Activated CD8-positive, alpha-beta memory T cell treated with anti-CD3 and anti-CD28 coated beads, Interleukin-2, amount 10 ng/mL, durations not matched to agents 7 days and 5 days (primary cell): ENCODE measurements at regions of chr19 and their contacts with region 1.

Region 1: DNA sequence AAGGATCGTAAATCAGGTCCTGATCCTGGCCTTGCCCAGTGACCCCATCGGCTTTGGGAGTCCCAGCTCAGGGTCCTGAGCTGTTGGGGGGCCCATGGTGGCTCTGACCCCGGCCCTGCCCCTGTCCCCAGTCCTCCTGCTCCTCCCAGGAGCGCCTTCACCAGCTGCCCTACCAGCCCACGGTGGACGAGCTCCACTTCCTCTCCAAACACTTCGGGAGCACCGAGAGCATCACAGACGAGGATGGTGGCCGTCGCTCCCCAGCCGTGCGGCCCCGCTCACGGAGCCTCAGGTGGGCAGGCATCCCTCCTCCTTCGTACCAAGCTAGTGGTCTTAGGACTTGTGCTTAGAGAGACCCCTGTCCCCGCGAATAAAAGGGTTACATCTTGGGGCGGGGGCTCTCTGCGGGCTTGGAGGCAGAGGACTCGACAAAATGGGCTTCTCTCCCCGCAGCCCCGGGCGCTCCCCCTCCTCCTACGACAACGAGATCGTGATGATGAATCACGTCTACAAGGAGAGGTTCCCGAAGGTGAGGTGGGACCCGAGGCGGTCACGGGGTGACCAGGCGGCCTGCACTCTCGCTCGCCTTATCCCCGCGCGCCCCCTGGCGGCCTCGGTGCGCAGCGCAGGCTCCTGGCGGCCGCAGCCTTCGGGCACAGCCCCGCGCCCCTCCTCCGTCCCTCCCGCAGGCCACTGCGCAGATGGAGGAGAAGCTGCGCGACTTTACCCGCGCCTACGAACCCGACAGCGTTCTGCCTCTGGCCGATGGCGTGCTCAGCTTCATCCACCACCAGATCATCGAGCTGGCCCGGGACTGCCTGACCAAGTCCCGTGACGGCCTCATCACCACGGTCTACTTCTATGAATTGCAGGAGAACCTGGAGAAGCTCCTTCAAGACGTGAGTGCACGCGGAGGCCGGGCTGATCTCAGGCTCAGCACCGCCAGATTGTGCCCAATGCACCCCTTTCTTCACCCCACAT is 9.1 kb downstream of the MAST1 start:
- DNase-seq: peak; percentile 87
- ATAC-seq: peak; percentile 97
- H3K4me3 Mint-ChIP-seq: peak overlapping the region; percentile 35
- H3K27ac Mint-ChIP-seq: no peak overlapping the region
- H3K4me1 Mint-ChIP-seq: peaks cover 8% of the 10 kb centered on the region
- H3K27me3 Mint-ChIP-seq: peaks cover 22% of the 10 kb centered on the region

Region 2: GRCh38 chr19:12757544-12758274 is 89.7 kb before region 1 on chr19:
- CTCF ChIA-PET with region 1: interaction called, 146 read pairs
- DNase-seq: peak; percentile 70
- ATAC-seq: peak; percentile 80
- H3K4me3 Mint-ChIP-seq: peak overlapping the region; percentile 23
- H3K27ac Mint-ChIP-seq: no peak overlapping the region
- H3K4me1 Mint-ChIP-seq: peaks cover 5% of the 10 kb centered on the region
- H3K27me3 Mint-ChIP-seq: peaks cover 15% of the 10 kb centered on the region

Region 3: DNA sequence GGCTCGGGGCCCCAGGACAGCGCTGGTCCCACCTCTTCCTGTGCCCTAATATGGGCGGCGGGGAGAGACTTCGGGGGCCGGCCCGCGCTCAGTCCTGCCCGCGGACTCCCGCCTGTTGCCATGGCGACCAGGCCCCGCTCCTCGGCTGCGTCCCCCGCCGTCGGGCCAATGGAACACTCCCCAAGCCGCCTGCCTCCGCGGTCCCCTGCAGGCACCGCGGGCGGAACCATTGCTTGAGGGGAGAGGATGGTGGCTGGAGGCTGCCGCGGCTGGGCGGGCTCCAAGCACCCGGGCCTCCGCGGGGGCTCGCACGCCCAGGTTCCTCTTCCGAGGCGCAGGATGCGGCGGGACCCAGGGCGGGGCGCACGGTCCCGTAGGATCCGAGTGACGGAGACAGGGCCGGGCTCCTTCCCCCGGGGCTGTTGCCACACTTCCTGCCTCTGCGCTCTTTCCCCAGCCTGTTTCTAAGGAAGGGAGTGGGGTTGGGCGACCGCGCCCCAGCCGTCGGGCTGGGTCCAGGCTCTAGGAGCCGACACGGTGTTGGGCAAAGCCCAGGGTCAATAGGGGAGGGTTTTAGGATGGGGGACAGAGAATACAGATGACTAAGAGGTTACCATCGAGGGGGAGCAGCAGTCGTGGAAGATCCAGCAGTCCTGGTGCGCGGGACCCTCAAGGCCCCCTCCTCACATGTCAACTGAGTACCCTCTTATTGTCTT is 57.4 kb before region 1 on chr19:
- CTCF ChIA-PET with region 1: interaction called, 10 read pairs
- DNase-seq: peak; percentile 99
- ATAC-seq: peak; percentile 50
- H3K4me3 Mint-ChIP-seq: peak overlapping the region; percentile 93
- H3K27ac Mint-ChIP-seq: peak overlapping the region; percentile 95
- H3K4me1 Mint-ChIP-seq: peaks cover 37% of the 10 kb centered on the region
- H3K27me3 Mint-ChIP-seq: no peaks in the 10 kb centered on the region

Region 4: DNA sequence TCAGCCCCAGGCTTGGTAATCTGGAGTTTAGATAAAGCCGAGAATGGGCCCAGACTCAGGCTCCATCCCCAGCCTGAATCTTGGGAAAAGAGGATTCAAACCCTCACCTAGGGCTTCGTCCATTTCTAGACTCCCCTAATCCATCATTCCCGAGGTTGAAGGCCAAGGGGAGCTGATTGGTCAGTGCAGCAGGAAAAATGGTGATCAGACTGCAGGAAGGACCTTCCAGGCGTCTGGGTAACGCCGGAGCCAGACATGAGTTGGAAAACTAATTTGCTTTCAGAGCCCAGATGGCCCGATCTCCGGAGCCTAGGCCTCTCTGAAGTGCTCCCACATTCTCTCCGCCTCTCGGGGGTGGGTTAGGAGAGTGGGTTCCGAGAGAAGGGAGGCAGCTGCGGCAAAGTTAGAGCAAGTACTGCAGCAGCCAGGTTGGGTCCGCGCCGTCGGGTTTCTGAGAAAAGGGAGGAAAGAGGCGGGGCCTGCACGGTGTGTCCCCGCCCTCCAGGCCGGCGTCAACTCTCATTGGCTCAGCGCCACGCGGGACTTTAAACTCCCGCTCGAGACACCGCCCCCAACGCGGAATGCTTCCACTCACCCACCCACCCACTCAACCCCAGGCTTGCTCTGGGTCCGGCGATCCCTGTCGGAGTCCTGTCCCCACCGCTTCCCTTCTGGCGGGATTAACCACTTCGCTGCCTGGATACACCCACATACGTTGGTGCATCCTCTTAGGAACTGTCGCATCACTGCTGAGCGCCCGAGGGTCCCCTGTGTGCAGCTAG is 12.3 kb before region 1 on chr19:
- CTCF ChIA-PET with region 1: interaction called, 18 read pairs
- DNase-seq: no peak
- ATAC-seq: no peak
- H3K4me3 Mint-ChIP-seq: no peak overlapping the region
- H3K27ac Mint-ChIP-seq: no peak overlapping the region
- H3K4me1 Mint-ChIP-seq: peaks cover 22% of the 10 kb centered on the region
- H3K27me3 Mint-ChIP-seq: peaks cover 83% of the 10 kb centered on the region

Region 5: GRCh38 chr19:12872941-12873890 is 25.8 kb after region 1 on chr19:
- CTCF ChIA-PET with region 1: interaction called, 13 read pairs
- DNase-seq: peak; percentile 86
- ATAC-seq: peak; percentile 76
- H3K4me3 Mint-ChIP-seq: peak overlapping the region; percentile 43
- H3K27ac Mint-ChIP-seq: no peak overlapping the region
- H3K4me1 Mint-ChIP-seq: peaks cover 6% of the 10 kb centered on the region
- H3K27me3 Mint-ChIP-seq: no peaks in the 10 kb centered on the region